ENCODE measurements at regions of chr22 and their contacts with region 1.

Region 1: DNA sequence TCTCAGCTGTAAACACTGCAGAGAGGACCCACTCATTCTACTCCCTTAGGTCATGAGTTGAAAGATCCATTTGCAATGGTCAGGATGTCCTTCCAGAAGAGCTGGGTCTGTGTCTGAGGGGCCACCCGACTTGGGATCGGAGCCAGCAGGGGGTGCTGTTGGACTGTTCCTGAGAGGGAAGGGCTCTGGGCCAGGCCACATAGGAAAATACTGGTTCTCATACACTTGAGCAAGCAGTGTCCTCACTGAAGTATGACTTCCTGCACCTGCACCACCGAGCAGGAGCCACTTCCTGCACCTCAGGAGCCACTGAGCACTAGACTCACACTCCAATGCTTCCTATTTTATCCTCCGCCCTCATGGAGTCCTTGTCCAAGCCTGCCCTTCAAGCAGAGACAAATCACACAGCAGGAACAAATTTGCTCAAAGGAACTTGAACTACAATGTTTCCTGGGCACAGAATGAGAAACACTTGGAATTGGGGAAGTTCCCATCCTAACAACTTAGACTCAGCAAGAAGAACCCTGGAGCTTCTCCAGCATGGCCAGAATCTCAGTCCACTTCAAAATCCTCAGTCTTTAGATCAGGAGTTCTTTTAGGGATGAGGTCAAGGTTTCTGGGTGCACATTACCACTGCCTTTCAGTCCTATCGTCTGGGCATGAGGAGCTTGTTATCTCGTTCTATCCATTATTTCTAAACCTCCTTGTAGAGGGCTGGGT is 36.6 kb upstream of the VPREB1 start:
- DNase-seq: peak; percentile 69
- ATAC-seq: peak; percentile 88
- H3K4me3 ChIP-seq: no peak overlapping the region
- H3K27ac ChIP-seq: no peak overlapping the region
- H3K4me1 ChIP-seq: peaks cover 6 to 24% of the 10 kb centered on the region in 2 experiments
- H3K27me3 ChIP-seq: no peaks in the 10 kb centered on the region
- CTCF ChIP-seq: peak; percentile 68 to 88 (median 85); a peak in 5 of 6 replicates
- POLR2A ChIP-seq: no peak
- RAD21 ChIP-seq: peak; percentile 80

Region 2: GRCh38 chr22:22110548-22111266 is 97.3 kb before region 1 on chr22:
- CTCF ChIA-PET with region 1: interaction called, 14 read pairs
- POLR2A ChIA-PET with region 1: no interaction called
- RAD21 ChIA-PET with region 1: no interaction called
- intact Hi-C with region 1: no loop called
- DNase-seq: peak; percentile 46
- ATAC-seq: peak; percentile 99
- H3K4me3 ChIP-seq: no peak overlapping the region
- H3K27ac ChIP-seq: no peak overlapping the region
- H3K4me1 ChIP-seq: peaks cover 4 to 12% of the 10 kb centered on the region in 2 experiments; a peak in 3 of 4 replicates
- H3K27me3 ChIP-seq: no peaks in the 10 kb centered on the region
- CTCF ChIP-seq: peak; percentile 24 to 79 (median 69); a peak in 4 of 6 replicates
- POLR2A ChIP-seq: no peak
- RAD21 ChIP-seq: peak; percentile 36; the same call in 1 of the 2 replicates

Region 3: GRCh38 chr22:22156716-22157347 is 51.2 kb before region 1 on chr22:
- CTCF ChIA-PET with region 1: interaction called, 3 read pairs
- POLR2A ChIA-PET with region 1: no interaction called
- RAD21 ChIA-PET with region 1: no interaction called
- intact Hi-C with region 1: loop called (anchors 10 kb)
- DNase-seq: peak; percentile 74
- ATAC-seq: peak; percentile 95
- H3K4me3 ChIP-seq: no peak overlapping the region
- H3K27ac ChIP-seq: no peak overlapping the region
- H3K4me1 ChIP-seq: no peaks in the 10 kb centered on the region
- H3K27me3 ChIP-seq: 0 out of 2 replicates have a peak, but pooled peaks cover 6% of the 10 kb centered on the region
- CTCF ChIP-seq: peak; percentile 51 to 78 (median 73); a peak in 5 of 6 replicates
- POLR2A ChIP-seq: no peak
- RAD21 ChIP-seq: peak; percentile 61

Region 4: DNA sequence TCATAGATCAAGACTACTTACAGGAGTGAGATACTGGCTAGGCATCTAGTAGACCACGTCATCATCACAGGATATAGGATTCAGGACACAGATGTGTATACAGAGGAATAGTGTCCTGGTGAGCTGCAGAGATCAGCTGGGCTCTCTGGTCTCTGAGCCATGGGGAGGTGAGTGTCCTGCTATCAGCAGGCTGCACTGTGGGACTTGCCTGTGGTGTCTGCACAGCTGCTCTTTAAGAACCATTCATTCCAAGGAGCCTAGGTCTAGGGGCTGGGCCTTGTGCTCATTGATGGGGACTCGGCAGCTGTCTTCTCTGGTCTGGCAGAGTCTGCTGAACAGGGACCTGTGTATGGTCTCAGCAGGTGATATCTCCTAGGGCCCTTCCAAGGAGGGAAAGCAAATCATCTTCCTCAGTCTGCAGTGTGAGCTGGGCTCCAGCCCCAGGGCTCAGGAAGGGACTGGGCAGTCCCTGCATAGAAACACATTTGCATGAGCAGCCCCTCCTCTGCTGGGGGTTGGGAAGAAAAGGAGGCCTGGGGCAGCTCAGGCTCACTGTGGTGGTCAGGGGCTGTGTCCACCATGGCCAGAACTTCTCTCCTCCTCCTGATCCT is 29.5 kb before region 1 on chr22:
- CTCF ChIA-PET with region 1: no interaction called
- POLR2A ChIA-PET with region 1: no interaction called
- RAD21 ChIA-PET with region 1: no interaction called
- intact Hi-C with region 1: no loop called
- DNase-seq: no peak
- ATAC-seq: no peak
- H3K4me3 ChIP-seq: no peak overlapping the region
- H3K27ac ChIP-seq: no peak overlapping the region
- H3K4me1 ChIP-seq: no peaks in the 10 kb centered on the region
- H3K27me3 ChIP-seq: peaks cover 23% of the 10 kb centered on the region; the same call in 1 of the 2 replicates
- CTCF ChIP-seq: no peak
- POLR2A ChIP-seq: no peak
- RAD21 ChIP-seq: no peak

Region 5: GRCh38 chr22:22235558-22235957 is 27.6 kb after region 1 on chr22:
- CTCF ChIA-PET with region 1: interaction called, 11 read pairs
- POLR2A ChIA-PET with region 1: no interaction called
- RAD21 ChIA-PET with region 1: interaction called in 1 of 2 experiments, 3 read pairs
- intact Hi-C with region 1: no loop called
- DNase-seq: no peak
- ATAC-seq: no peak
- H3K4me3 ChIP-seq: no peak overlapping the region
- H3K27ac ChIP-seq: no peak overlapping the region
- H3K4me1 ChIP-seq: peaks cover 0 to 5% of the 10 kb centered on the region in 2 experiments; a peak in 1 of 4 replicates
- H3K27me3 ChIP-seq: no peaks in the 10 kb centered on the region
- CTCF ChIP-seq: peak; percentile 24 to 63 (median 50); a peak in 5 of 6 replicates
- POLR2A ChIP-seq: no peak
- RAD21 ChIP-seq: peak; percentile 38

Region 6: GRCh38 chr22:22322792-22323191 is 114.8 kb after region 1 on chr22:
- CTCF ChIA-PET with region 1: interaction called, 4 read pairs
- POLR2A ChIA-PET with region 1: no interaction called
- RAD21 ChIA-PET with region 1: no interaction called
- intact Hi-C with region 1: loop called (anchors 5 kb)
- DNase-seq: no peak
- ATAC-seq: no peak
- H3K4me3 ChIP-seq: no peak overlapping the region
- H3K27ac ChIP-seq: no peak overlapping the region
- H3K4me1 ChIP-seq: no peaks in the 10 kb centered on the region
- H3K27me3 ChIP-seq: no peaks in the 10 kb centered on the region
- CTCF ChIP-seq: no peak
- POLR2A ChIP-seq: no peak
- RAD21 ChIP-seq: no peak

Region 7: DNA sequence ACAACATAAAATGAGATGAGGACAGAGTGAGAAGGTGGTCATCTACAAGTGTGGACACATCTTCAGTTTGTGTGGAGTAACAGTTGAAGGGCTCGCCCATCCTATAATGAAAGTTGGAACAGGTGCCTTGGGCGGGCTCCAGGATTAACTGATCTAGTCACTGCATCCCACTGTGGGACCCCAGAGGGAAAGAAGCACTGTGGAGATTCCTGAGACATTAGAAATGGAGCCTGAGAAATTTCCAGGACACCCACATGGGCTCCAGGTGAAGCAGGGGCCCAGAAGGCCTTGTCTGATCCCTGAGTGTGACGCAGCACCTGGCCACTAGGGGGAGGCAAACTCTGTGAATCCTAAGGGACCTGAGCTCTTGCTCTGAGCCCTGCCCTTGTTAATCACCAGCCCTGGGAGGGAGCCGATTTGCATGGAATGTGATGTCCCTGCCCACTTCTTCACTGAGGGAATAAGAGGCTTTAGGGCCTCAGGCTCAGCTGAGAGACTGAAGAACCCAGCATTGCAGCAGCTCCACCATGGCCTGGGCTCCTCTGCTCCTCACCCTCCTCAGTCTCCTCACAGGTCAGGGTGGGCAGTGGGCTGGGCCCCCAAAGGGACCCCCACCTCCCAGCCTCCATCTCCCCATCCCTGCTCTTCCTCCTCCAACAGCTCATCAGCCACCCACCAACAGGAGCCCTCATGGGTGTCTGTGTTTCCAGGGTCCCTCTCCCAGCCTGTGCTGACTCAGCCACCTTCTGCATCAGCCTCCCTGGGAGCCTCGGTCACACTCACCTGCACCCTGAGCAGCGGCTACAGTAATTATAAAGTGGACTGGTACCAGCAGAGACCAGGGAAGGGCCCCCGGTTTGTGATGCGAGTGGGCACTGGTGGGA is 134.9 kb after region 1 on chr22:
- CTCF ChIA-PET with region 1: interaction called, 5 read pairs
- POLR2A ChIA-PET with region 1: no interaction called
- RAD21 ChIA-PET with region 1: no interaction called
- intact Hi-C with region 1: loop called (anchors 10 kb)
- DNase-seq: peak; percentile 77
- ATAC-seq: peak; percentile 100
- H3K4me3 ChIP-seq: no peak overlapping the region
- H3K27ac ChIP-seq: no peak overlapping the region
- H3K4me1 ChIP-seq: peaks cover 0 to 1% of the 10 kb centered on the region in 2 experiments; a peak in 2 of 4 replicates
- H3K27me3 ChIP-seq: peaks cover 25% of the 10 kb centered on the region; the same call in 1 of the 2 replicates
- CTCF ChIP-seq: peak; percentile 46 to 97 (median 95); a peak in 5 of 6 replicates
- POLR2A ChIP-seq: no peak
- RAD21 ChIP-seq: peak; percentile 47

Region 8: GRCh38 chr22:22408731-22409696 is 201.0 kb after region 1 on chr22:
- CTCF ChIA-PET with region 1: interaction called, 3 read pairs
- POLR2A ChIA-PET with region 1: no interaction called
- RAD21 ChIA-PET with region 1: no interaction called
- intact Hi-C with region 1: loop called (anchors 10 kb)
- DNase-seq: peak; percentile 33
- ATAC-seq: peak; percentile 100
- H3K4me3 ChIP-seq: no peak overlapping the region
- H3K27ac ChIP-seq: no peak overlapping the region
- H3K4me1 ChIP-seq: no peaks in the 10 kb centered on the region
- H3K27me3 ChIP-seq: peaks cover 52% of the 10 kb centered on the region
- CTCF ChIP-seq: peak; percentile 38 to 77 (median 68); a peak in 5 of 6 replicates
- POLR2A ChIP-seq: no peak
- RAD21 ChIP-seq: peak; percentile 46